Activated B cell treated with CpG ODN at 0.5 μM for 24 hours (primary cell): ENCODE measurements at regions of chr6 and their contacts with region 1.

Region 1: GRCh38 chr6:158718461-158719046 is 68.7 kb downstream of the SYTL3 start:
- DNase-seq: no peak
- ATAC-seq: no peak
- H3K4me3 Mint-ChIP-seq: no peak overlapping the region
- H3K27ac Mint-ChIP-seq: peak overlapping the region; percentile 97
- H3K4me1 Mint-ChIP-seq: peaks cover 78% of the 10 kb centered on the region
- H3K27me3 Mint-ChIP-seq: no peaks in the 10 kb centered on the region
- CTCF ChIP-seq: no peak

Region 2: GRCh38 chr6:158704181-158704822 is 14.3 kb before region 1 on chr6:
- CTCF ChIA-PET with region 1: interaction called, 13 read pairs
- POLR2A ChIA-PET with region 1: interaction called, 28 read pairs
- intact Hi-C with region 1: loop called (anchors 1 kb)
- DNase-seq: peak; percentile 89
- ATAC-seq: peak; percentile 95
- H3K4me3 Mint-ChIP-seq: peak overlapping the region; percentile 86
- H3K27ac Mint-ChIP-seq: peak overlapping the region; percentile 81
- H3K4me1 Mint-ChIP-seq: peaks cover 29% of the 10 kb centered on the region
- H3K27me3 Mint-ChIP-seq: no peaks in the 10 kb centered on the region
- CTCF ChIP-seq: peak; percentile 92

Region 3: GRCh38 chr6:158762787-158763433 is 44.4 kb after region 1 on chr6:
- CTCF ChIA-PET with region 1: no interaction called
- POLR2A ChIA-PET with region 1: interaction called, 29 read pairs
- intact Hi-C with region 1: no loop called
- DNase-seq: no peak
- ATAC-seq: no peak
- H3K4me3 Mint-ChIP-seq: no peak overlapping the region
- H3K27ac Mint-ChIP-seq: peak overlapping the region; percentile 24
- H3K4me1 Mint-ChIP-seq: no peaks in the 10 kb centered on the region
- H3K27me3 Mint-ChIP-seq: no peaks in the 10 kb centered on the region
- CTCF ChIP-seq: no peak

Region 4: GRCh38 chr6:158780988-158781708 is 62.6 kb after region 1 on chr6:
- CTCF ChIA-PET with region 1: no interaction called
- POLR2A ChIA-PET with region 1: interaction called, 11 read pairs
- intact Hi-C with region 1: no loop called
- DNase-seq: no peak
- ATAC-seq: no peak
- H3K4me3 Mint-ChIP-seq: no peak overlapping the region
- H3K27ac Mint-ChIP-seq: peak overlapping the region; percentile 56
- H3K4me1 Mint-ChIP-seq: peaks cover 2% of the 10 kb centered on the region
- H3K27me3 Mint-ChIP-seq: no peaks in the 10 kb centered on the region
- CTCF ChIP-seq: no peak

Region 5: GRCh38 chr6:158808941-158809678 is 90.6 kb after region 1 on chr6:
- CTCF ChIA-PET with region 1: no interaction called
- POLR2A ChIA-PET with region 1: interaction called, 27 read pairs
- intact Hi-C with region 1: loop called (anchors 2 kb)
- DNase-seq: peak; percentile 40
- ATAC-seq: peak; percentile 80
- H3K4me3 Mint-ChIP-seq: peak overlapping the region; percentile 67
- H3K27ac Mint-ChIP-seq: peak overlapping the region; percentile 94
- H3K4me1 Mint-ChIP-seq: peaks cover 98% of the 10 kb centered on the region
- H3K27me3 Mint-ChIP-seq: no peaks in the 10 kb centered on the region
- CTCF ChIP-seq: no peak

Region 6: DNA sequence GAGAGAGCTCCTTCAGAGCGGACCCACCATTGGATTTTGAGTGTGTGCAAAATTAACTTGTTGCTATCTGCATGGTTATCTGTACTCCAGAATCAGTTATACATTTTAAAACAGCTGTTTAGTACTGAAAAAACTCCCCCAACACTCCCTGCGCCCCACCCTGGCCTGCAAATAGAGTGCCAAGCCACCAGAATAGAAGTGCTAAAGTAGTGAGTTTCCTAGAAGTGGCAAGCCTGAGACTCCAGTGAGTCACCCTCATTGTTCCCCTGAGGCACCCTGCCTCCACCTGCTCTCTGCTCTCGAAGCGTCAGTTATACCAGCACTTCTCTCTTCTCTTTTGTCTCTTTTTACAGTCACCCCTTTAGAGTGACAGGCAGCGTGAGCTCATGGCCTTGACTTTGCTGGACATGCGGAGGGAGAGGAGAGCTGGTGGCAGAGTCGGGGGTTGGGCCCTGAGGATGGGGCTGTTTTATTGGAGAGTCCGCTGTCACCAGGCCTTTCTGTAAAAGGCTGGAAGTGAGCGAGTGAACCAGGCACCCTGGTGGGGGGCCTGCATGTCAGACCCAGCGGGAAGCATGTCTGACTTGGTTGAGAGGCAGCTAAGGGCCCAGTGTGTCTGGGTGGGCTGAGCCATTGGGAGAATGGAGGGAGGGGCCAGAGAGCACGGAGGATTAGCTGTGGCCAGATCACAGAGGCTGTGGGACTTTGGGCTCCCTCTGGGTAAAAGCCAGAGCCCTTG is 1260.8 kb after region 1 on chr6:
- CTCF ChIA-PET with region 1: no interaction called
- POLR2A ChIA-PET with region 1: no interaction called
- intact Hi-C with region 1: loop called (anchors 5 kb)
- DNase-seq: peak; percentile 61
- ATAC-seq: peak; percentile 86
- H3K4me3 Mint-ChIP-seq: peak overlapping the region; percentile 76
- H3K27ac Mint-ChIP-seq: peak overlapping the region; percentile 90
- H3K4me1 Mint-ChIP-seq: peaks cover 88% of the 10 kb centered on the region
- H3K27me3 Mint-ChIP-seq: no peaks in the 10 kb centered on the region
- CTCF ChIP-seq: no peak